AG04449 (cell line): ENCODE measurements at regions of chr9 and their contacts with region 1.

Region 1: GRCh38 chr9:126500684-126501382 is 112.9 kb upstream of the LMX1B start:
- DNase-seq: no peak
- H3K4me3 ChIP-seq: no peak overlapping the region
- CTCF ChIP-seq: peak; percentile 99

Region 2: DNA sequence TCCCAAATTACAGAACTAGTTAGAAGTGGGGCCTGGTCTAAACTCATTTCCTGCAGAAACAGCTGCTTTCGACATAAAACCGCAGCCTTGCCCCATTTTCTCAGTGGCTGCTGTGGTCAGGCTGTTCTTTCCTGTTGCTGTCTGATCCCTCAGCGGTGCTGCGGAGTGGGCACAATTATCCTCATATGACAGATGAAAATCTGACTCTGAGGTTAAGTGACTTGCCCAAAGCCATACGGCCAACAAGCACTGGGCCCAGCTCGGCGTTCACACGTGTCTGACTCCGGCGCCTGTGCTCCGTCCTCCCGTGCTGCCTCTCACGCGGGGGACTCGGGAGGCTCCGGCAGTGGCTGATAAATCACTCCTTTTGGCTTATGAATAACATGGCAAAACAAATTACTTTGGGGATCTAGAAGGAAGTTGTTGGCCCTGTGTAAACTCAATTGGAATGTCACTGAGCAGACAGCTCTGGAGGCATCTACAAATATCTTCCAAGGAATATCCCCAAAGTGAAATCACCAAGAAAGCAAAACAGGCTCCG is 29.7 kb before region 1 on chr9:
- CTCF ChIA-PET with region 1: interaction called, 30 read pairs
- POLR2A ChIA-PET with region 1: no interaction called
- DNase-seq: peak; percentile 53
- H3K4me3 ChIP-seq: peak overlapping the region; percentile 19
- CTCF ChIP-seq: no peak

Region 3: DNA sequence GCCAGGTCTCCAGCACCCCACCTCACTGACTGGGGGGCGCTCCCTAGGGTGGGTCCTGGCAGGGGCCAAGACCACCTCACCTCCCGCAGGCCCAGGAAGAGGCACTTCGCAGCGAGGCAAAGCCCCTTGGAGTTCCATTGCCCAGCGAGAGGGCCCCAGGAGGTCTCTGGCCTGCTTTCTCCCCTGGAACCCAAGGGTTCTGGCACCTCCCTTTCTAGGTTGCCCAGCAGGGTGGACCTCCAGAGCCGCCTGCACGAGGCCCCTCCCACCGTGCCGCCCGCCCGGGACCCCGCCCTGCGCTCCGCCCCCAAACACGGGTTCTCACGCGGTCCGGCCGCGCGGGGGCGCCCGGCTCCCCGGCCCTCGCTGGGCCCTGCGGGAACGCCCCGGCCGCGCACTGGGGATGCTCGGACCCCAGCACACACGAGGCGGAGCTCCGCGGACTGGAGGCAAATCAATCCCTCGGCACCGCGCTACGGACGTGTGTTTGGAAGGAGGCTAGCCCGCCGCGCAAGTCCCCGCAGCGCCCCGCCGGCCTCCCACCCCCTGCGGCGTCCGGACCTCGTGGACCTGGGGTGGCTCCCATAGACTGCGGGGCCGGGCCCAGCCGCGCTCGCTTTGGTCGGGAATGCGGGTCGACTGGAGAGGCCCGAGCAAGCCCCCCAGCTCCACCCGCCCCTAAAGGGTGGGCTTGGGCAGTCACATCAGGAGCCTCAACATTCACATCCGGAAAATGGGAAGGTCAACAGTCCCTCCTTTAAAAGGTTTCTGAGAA is 13.4 kb after region 1 on chr9:
- CTCF ChIA-PET with region 1: interaction called, 244 read pairs
- POLR2A ChIA-PET with region 1: no interaction called
- DNase-seq: no peak
- H3K4me3 ChIP-seq: peak overlapping the region; percentile 39
- CTCF ChIP-seq: peak; percentile 50

Region 4: GRCh38 chr9:126538550-126538949 is 37.7 kb after region 1 on chr9:
- CTCF ChIA-PET with region 1: interaction called, 25 read pairs
- POLR2A ChIA-PET with region 1: no interaction called
- DNase-seq: no peak
- H3K4me3 ChIP-seq: no peak overlapping the region
- CTCF ChIP-seq: no peak

Region 5: DNA sequence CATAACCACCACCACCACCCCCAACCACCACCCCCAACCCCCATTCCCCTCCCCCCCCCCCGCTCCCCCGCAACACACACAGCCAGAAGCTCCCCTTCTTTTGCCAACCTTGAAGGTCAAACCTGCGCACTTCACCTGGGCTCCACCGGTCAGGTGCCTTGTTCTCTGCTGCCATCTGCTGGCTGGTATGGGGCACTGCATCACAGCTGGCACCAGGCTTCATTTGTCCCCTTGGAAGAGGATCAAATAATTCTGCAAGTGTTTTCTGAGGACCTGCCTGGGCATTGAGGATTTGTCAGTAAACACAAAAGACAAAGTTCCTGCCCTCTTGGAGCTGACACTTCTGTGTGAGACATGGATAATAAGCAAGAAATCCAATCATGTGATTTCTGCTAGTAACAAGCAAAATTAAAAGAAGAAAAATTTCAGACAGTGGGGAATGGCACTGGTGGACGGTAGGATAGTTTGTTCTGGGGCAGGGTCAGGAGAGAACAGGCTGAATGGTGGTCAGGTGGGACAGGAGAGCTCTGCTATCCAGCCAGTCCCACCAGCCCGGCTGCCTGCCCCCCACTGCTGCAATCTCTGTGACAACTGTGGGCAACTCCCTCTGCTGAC is 57.3 kb after region 1 on chr9:
- CTCF ChIA-PET with region 1: interaction called, 269 read pairs
- POLR2A ChIA-PET with region 1: no interaction called
- DNase-seq: no peak
- H3K4me3 ChIP-seq: no peak overlapping the region
- CTCF ChIP-seq: peak; percentile 92

Region 6: GRCh38 chr9:126673689-126674364 is 173.0 kb after region 1 on chr9:
- CTCF ChIA-PET with region 1: no interaction called
- POLR2A ChIA-PET with region 1: no interaction called
- DNase-seq: no peak
- H3K4me3 ChIP-seq: no peak overlapping the region
- CTCF ChIP-seq: no peak

Region 7: GRCh38 chr9:126690431-126691350 is 189.9 kb after region 1 on chr9:
- CTCF ChIA-PET with region 1: interaction called, 13 read pairs
- POLR2A ChIA-PET with region 1: no interaction called
- DNase-seq: no peak
- H3K4me3 ChIP-seq: no peak overlapping the region
- CTCF ChIP-seq: peak; percentile 58